HEK293 (cell line): ENCODE measurements at regions of chr1 and their contacts with region 1.

Region 1: GRCh38 chr1:115771847-115772457 is 3.4 kb upstream of the CASQ2 start:
- H3K4me3 ChIP-seq: no peak overlapping the region
- H3K27ac ChIP-seq: no peak overlapping the region
- H3K4me1 ChIP-seq: no peaks in the 10 kb centered on the region
- CTCF ChIP-seq: peak; percentile 79

Region 2: GRCh38 chr1:115609021-115609420 is 162.9 kb before region 1 on chr1:
- CTCF ChIA-PET with region 1: interaction called, 46 read pairs
- POLR2A ChIA-PET with region 1: no interaction called
- H3K4me3 ChIP-seq: no peak overlapping the region
- H3K27ac ChIP-seq: no peak overlapping the region
- H3K4me1 ChIP-seq: no peaks in the 10 kb centered on the region
- CTCF ChIP-seq: no peak

Region 3: GRCh38 chr1:115717541-115717940 is 54.4 kb before region 1 on chr1:
- CTCF ChIA-PET with region 1: interaction called, 59 read pairs
- POLR2A ChIA-PET with region 1: no interaction called
- H3K4me3 ChIP-seq: no peak overlapping the region
- H3K27ac ChIP-seq: no peak overlapping the region
- H3K4me1 ChIP-seq: no peaks in the 10 kb centered on the region
- CTCF ChIP-seq: no peak; the same call in 1 of the 2 replicates

Region 4: GRCh38 chr1:115782571-115783281 is 10.8 kb after region 1 on chr1:
- CTCF ChIA-PET with region 1: interaction called, 11 read pairs
- POLR2A ChIA-PET with region 1: interaction called, 6 read pairs
- H3K4me3 ChIP-seq: no peak overlapping the region
- H3K27ac ChIP-seq: no peak overlapping the region
- H3K4me1 ChIP-seq: no peaks in the 10 kb centered on the region
- CTCF ChIP-seq: no peak

Region 5: GRCh38 chr1:115980998-115981993 is 209.3 kb after region 1 on chr1:
- CTCF ChIA-PET with region 1: interaction called, 18 read pairs
- POLR2A ChIA-PET with region 1: no interaction called
- H3K4me3 ChIP-seq: no peak overlapping the region
- H3K27ac ChIP-seq: no peak overlapping the region
- H3K4me1 ChIP-seq: no peaks in the 10 kb centered on the region
- CTCF ChIP-seq: peak; percentile 70